Dendritic cell treated with granulocyte-macrophage colony-stimulating factor and Interleukin-4, amounts not matched to agents 40 ng/mL and 50 ng/mL, for 4 days (primary cell): ENCODE measurements at regions of chr15 and their contacts with region 1.

Region 1: GRCh38 chr15:85312486-85312885 is 67.9 kb upstream of the AKAP13 start:
- H3K4me3 Mint-ChIP-seq: no peak overlapping the region
- H3K27ac Mint-ChIP-seq: no peak overlapping the region
- H3K4me1 Mint-ChIP-seq: peaks cover 36% of the 10 kb centered on the region
- H3K27me3 Mint-ChIP-seq: no peaks in the 10 kb centered on the region

Region 2: DNA sequence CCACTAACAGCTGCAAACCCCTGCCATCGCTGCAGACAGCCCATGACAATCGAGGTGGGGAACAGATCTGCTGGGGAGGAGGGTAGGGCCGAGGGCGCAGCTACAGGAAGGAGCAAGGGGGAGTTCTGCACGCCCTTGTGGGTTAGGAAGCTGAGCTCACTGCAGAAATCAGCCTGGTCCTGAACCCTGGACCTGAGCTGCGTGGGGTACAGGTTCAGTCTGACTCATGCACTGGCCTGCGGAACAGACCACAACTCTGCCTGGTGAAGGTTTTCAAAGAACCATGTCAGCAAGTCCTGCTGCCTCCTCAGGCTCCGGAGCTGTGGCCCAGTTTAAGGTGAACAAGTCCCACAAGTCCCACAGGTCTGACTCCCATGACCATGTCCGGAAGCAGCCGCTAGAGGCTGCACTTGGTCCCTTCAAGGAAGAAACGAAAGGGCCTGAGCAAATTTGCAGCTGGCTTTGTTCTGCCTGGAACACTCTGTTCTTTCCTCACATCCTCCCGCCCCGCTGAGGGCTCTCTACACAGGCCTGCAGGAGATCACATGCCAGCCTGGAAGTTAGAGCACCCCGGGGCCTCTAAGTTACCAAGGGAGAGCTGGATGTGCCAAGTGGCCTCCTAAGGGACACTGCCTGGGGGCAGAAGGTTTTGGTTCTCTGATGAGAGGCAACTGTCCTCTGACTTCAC is 18.6 kb after region 1 on chr15:
- intact Hi-C with region 1: loop called (anchors 2 kb)
- H3K4me3 Mint-ChIP-seq: peak overlapping the region; percentile 23
- H3K27ac Mint-ChIP-seq: peak overlapping the region; percentile 67
- H3K4me1 Mint-ChIP-seq: peaks cover 32% of the 10 kb centered on the region
- H3K27me3 Mint-ChIP-seq: no peaks in the 10 kb centered on the region